Activated CD4-positive, alpha-beta T cell treated with anti-CD3 and anti-CD28 coated beads, Interleukin-2, amount 10 ng/mL, durations not matched to agents 24 days and 14 days (primary cell): ENCODE measurements at regions of chr6 and their contacts with region 1.

Region 1: DNA sequence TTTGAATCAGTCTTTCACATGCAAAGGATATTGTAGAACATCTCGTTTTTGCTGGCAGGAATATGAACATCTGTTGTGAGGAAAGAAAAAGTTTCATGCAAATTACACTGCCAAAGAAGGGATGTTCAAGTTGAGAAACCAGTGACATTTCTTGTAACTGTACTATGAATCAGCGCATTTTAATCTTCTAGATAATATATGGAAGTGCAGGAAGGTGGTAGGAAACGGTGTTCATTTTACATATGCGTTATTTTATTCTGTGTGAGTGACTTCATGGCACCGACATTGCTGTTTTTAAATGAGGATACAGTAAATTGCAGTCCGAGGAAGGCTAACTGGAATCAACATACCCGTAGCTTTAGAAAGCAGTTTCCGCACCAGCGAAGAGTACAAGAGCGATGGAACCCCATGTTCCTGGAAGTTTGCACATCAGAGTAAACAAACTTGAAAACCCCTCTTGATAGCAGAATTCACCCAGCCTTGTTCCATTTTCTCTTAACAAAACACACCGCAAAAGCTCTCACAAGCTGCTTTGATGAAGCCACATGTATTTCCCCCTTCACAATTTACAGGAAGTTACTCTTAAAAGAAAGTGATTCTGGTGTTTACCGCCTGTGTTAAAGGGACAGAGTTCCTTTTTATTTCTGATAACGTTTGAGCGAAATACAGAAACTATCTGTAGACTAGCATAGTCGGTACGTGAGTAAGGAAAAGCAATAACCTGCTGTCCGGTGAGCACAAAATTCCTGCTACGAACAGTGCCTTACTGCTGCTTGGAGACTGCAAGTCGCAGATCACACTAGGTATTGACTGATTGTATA is 11.5 kb downstream of the PRDM1 start:
- DNase-seq: peak; percentile 92
- H3K4me3 Mint-ChIP-seq: peak overlapping the region; percentile 91
- H3K27ac Mint-ChIP-seq: peak overlapping the region; percentile 97
- H3K4me1 Mint-ChIP-seq: peaks cover 75% of the 10 kb centered on the region
- H3K27me3 Mint-ChIP-seq: no peaks in the 10 kb centered on the region

Region 2: DNA sequence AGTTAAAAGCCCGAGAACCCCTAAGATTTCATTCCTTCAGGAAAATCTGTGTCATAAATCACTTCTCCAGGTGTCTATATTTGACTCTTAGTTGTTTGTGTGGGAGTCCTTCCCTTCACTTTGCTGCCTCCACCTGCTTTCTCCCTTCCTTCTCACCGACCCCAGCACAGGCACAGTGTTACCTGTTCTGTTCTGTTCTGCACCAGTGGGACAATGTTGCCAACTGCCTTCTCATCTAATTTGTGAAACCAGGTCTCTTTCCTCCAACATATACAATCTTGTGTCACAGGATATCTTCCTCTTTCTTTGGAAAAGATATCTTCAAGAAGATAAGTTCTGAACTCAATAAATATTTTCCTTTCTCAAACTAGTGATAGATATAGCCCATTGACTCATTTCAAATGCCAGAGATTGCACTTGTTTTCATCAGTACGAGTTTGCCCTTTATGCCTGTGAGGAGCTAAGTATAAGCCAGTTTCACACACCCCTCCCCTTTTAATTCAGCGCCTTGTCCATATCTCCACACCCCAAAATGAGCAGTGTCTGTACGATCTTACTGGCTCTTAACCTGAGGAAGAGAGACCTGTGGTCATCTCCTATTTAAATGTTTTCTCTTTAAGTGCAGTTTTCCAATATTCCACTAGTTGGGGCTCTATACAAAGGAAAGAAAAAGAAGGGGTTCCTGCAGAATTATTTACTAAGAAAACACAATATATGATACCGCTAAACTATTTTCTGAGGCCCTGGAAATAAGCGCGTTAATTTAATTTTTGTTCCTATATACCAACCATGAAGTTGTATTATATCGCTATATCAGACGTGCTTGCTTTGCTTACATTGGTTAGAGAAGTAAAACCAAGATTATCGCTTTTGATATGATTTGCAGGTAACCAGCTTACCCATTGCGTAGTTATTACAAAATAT is 613.1 kb before region 1 on chr6:
- intact Hi-C with region 1: loop called (anchors 5 kb)
- DNase-seq: peak; percentile 63
- H3K4me3 Mint-ChIP-seq: no peak overlapping the region
- H3K27ac Mint-ChIP-seq: peak overlapping the region; percentile 26
- H3K4me1 Mint-ChIP-seq: peaks cover 41% of the 10 kb centered on the region
- H3K27me3 Mint-ChIP-seq: peaks cover 6% of the 10 kb centered on the region

Region 3: GRCh38 chr6:105810105-105810921 is 287.3 kb before region 1 on chr6:
- intact Hi-C with region 1: loop called (anchors 1 kb)
- DNase-seq: peak; percentile 89
- H3K4me3 Mint-ChIP-seq: peak overlapping the region; percentile 45
- H3K27ac Mint-ChIP-seq: peak overlapping the region; percentile 71
- H3K4me1 Mint-ChIP-seq: peaks cover 67% of the 10 kb centered on the region
- H3K27me3 Mint-ChIP-seq: no peaks in the 10 kb centered on the region

Region 4: DNA sequence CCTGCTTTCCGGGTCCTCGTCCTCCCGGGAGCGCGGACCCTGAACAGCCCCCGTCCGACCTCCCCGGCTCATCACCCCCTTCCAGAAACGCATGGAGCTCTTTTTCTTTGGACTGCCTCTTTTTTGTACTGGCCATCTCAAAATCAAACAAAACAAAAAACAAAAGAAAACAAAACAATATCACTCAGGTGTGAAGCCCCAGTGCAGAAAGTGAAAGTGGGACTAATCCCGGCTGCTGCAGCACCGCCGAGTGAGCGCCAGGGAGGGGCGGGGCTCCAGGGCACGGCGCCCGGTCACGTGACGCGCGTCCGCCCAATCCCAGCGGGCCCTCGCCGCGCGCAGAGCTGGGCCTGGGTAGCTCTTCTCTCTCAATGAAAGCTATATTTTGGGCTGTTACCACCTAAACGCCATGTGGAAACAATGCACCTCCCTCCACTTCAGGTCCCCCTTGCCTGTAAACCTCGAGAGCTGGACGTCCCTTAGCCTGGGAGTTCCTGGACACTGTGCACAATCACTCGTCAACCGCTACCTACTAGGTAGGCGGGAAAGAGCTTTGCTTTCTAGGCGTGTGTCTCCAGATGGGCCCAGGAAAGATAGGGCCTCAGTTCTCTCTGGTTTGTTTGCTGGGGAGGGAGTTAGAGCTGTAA is 105.2 kb before region 1 on chr6:
- intact Hi-C with region 1: loop called (anchors 1 kb)
- DNase-seq: peak; percentile 98
- H3K4me3 Mint-ChIP-seq: peak overlapping the region; percentile 93
- H3K27ac Mint-ChIP-seq: peak overlapping the region; percentile 91
- H3K4me1 Mint-ChIP-seq: peaks cover 45% of the 10 kb centered on the region
- H3K27me3 Mint-ChIP-seq: peaks cover 37% of the 10 kb centered on the region

Region 5: GRCh38 chr6:106163446-106163965 is 65.9 kb after region 1 on chr6:
- intact Hi-C with region 1: loop called (anchors 1 kb)
- DNase-seq: peak; percentile 88
- H3K4me3 Mint-ChIP-seq: peak overlapping the region; percentile 71
- H3K27ac Mint-ChIP-seq: peak overlapping the region; percentile 92
- H3K4me1 Mint-ChIP-seq: peaks cover 53% of the 10 kb centered on the region
- H3K27me3 Mint-ChIP-seq: no peaks in the 10 kb centered on the region

Region 6: GRCh38 chr6:106309766-106310373 is 212.2 kb after region 1 on chr6:
- intact Hi-C with region 1: loop called (anchors 5 kb)
- DNase-seq: no peak
- H3K4me3 Mint-ChIP-seq: no peak overlapping the region
- H3K27ac Mint-ChIP-seq: no peak overlapping the region
- H3K4me1 Mint-ChIP-seq: peaks cover 32% of the 10 kb centered on the region
- H3K27me3 Mint-ChIP-seq: no peaks in the 10 kb centered on the region